ENCODE measurements at regions of chr9 and their contacts with region 1.

Region 1: GRCh38 chr9:36855448-36856315 is 178.4 kb downstream of the PAX5 start:
- DNase-seq: peak; percentile 67
- CTCF ChIP-seq: peak; percentile 17

Region 2: DNA sequence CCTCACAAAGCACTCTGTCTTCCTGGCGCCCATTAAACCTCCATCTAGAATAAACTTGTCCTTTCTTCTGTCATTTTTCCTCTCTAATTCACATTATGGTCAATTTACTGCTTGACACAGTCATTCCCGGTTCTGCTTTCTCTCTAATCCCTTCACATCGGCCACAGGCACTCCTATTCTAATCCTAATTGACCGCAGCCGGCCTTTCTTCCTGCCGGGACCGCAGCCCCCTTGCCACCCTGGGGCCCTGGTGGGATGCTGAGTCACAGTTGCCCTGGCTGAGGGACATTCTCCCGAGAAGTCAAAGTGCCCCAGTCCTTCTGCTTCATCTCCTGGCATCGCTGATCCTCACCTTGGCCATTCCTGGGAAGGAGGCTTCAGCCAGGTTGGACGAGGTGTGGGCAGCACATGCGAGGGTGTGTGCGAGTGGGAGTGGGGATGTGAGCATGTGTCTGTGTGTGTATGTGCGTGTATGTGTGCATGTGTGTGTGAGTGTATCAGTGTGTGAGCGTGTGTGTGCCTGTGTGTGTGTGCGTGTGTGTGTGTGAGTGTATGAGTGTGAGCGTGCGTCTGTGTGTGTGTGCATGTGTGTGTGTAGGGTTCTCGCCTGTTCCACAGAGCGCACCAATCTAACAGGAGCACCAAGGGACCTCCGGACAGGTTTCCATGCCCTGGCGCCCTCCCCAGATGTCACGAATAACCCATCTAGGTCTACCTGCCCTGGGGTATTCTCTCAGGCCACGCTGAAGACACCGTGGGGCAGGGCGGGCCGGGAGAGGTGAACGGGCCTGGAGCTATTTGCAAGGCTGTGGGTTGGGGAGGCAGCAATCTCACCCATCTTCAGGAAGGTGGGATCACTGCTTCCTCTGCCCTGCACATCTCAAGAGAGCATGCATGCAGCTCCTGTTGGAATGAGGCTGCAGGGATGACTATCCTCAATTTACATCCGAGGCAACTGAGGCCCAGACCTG is 12.8 kb before region 1 on chr9:
- CTCF ChIA-PET with region 1: interaction called, 13 read pairs
- POLR2A ChIA-PET with region 1: no interaction called
- DNase-seq: no peak
- CTCF ChIP-seq: no peak

Region 3: DNA sequence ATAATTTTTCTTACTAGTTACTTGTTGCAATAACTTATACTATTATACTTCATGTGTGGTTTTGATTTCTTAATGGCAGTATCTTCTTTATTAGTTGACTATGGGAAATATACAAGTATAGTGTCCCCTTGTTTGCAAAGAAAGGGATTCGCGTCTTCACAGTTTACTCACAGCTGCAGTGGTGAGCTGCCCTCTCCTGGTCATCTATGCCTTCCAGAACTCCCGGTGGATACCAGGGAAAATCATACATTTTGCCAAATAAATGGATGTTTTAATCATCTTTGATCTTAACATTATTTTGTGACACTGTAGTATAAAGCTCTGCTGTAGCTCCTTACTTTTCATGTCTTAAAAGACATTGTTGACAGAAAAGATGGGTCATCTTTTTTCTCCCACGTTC is 406.7 kb after region 1 on chr9:
- CTCF ChIA-PET with region 1: no interaction called
- POLR2A ChIA-PET with region 1: no interaction called
- DNase-seq: no peak
- CTCF ChIP-seq: peak; percentile 12

Measured in GM10248 (cell line).